ENCODE measurements at regions of chr1 and their contacts with region 1.

Region 1: DNA sequence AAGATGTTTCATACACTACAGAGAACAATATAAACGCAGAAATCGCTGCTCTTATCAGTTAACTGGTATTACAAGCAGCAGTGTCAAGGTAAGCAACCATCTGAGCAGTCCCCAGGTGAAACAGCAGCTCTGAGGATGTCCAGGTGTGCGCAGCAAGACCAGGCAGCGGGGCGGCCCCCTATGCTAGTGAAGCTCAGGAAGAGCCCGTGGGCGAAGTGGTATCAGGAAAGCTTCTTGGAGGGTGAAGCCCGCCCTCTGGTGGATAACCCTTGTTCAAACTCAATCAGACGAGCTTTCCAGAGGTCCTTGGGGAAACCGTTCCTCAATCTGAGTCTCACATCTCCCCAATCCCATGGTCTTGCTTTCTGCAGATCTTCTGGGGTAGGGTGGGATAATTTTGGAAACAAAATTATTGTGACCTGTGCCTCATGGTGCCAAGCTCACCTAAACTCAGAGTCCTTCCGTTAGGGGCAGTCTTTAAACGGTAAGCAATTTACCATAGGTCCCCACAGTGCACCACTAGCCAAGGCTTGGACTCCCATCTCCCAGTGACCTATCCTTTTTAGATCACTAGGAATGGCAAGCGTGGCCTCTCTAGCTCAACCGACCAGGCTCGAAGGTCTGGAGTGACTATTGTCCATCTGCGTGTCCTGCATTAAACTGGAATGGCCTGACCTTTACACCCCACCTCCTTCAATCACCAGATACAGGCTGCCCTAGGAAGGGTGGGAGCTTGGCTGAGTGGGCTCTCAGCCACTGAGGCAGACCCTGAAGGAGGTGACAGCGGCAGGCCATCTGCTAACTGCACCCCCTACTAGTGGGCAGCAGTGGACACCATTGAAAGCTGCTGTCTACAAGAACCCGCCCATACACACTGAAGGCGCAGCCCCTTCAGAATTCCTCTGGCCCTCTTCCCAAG is 13.6 kb upstream of the FAM110D start:
- DNase-seq: peak; percentile 76
- H3K4me3 ChIP-seq: no peak overlapping the region
- H3K27ac ChIP-seq: no peak overlapping the region
- H3K4me1 ChIP-seq: no peaks in the 10 kb centered on the region
- H3K27me3 ChIP-seq: no peaks in the 10 kb centered on the region
- CTCF ChIP-seq: peak; percentile 66 to 83
- POLR2A ChIP-seq: no peak

Region 2: GRCh38 chr1:26035959-26036755 is 109.1 kb before region 1 on chr1:
- CTCF ChIA-PET with region 1: interaction called, 151 read pairs
- POLR2A ChIA-PET with region 1: interaction called, 4 read pairs
- dilution Hi-C with region 1: no loop called
- intact Hi-C with region 1: loop called (anchors 1 kb)
- DNase-seq: peak; percentile 74
- H3K4me3 ChIP-seq: peak overlapping the region; percentile 65 to 85 (median 81)
- H3K27ac ChIP-seq: no peak overlapping the region
- H3K4me1 ChIP-seq: peaks cover 15% of the 10 kb centered on the region
- H3K27me3 ChIP-seq: peaks cover 0 to 3% of the 10 kb centered on the region in 2 experiments
- CTCF ChIP-seq: peak; percentile 98 to 99
- POLR2A ChIP-seq: no peak

Region 3: GRCh38 chr1:26111530-26112406 is 33.5 kb before region 1 on chr1 and contains the start of gene PDIK1L:
- CTCF ChIA-PET with region 1: interaction called, 33 read pairs
- POLR2A ChIA-PET with region 1: no interaction called
- dilution Hi-C with region 1: no loop called
- intact Hi-C with region 1: loop called (anchors 1 kb)
- DNase-seq: peak; percentile 96
- H3K4me3 ChIP-seq: peak within 1 kb of the TSS; percentile 63 to 99 (median 75)
- H3K27ac ChIP-seq: peak within 1 kb of the TSS; percentile 47
- H3K4me1 ChIP-seq: peaks cover 11% of the 10 kb centered on the region
- H3K27me3 ChIP-seq: no peaks in the 10 kb centered on the region
- CTCF ChIP-seq: no peak
- POLR2A ChIP-seq: peak; percentile 72
- total RNA-seq, gene PDIK1L: 5.6 and 8.0 TPM in 2 replicates

Region 4: DNA sequence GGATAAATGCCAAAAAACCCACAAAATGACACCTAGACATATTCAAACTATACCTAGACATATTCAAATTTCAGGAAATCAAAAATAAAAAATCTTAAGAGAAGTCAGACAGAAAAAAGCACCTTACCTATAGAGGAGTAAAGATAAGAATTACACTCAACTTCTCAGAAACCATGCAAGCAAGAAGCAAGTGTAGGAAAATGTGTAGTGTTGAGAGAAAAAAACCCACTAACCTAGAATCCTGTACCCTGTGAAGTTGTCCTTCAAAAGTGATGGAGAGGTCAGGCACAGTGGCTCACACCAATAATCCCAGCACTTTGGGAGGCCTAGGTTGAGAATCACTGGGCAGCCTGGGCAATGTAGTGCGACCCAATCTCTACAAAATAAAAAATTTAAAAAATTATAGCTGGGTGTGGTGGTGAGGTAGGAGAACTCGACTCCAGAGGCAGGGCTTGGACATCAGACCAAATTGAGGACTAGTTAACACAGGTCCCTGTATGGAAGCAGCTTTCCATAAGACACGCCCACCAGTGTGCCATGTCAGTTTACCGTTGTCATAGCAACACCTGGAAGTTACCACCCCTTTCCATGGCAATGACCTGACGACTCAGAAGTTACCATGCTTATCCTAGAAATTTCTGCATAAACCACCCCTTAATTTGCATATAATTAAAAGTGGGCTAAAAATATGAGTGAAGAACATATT is 13.0 kb before region 1 on chr1:
- CTCF ChIA-PET with region 1: interaction called, 62 read pairs
- POLR2A ChIA-PET with region 1: no interaction called
- dilution Hi-C with region 1: no loop called
- intact Hi-C with region 1: no loop called
- DNase-seq: no peak
- H3K4me3 ChIP-seq: no peak overlapping the region
- H3K27ac ChIP-seq: no peak overlapping the region
- H3K4me1 ChIP-seq: peaks cover 5% of the 10 kb centered on the region
- H3K27me3 ChIP-seq: no peaks in the 10 kb centered on the region
- CTCF ChIP-seq: no peak
- POLR2A ChIP-seq: no peak

Region 5: GRCh38 chr1:26169669-26170471 is 24.6 kb after region 1 on chr1 and contains the start of gene ZNF593:
- CTCF ChIA-PET with region 1: interaction called, 11 read pairs
- POLR2A ChIA-PET with region 1: no interaction called
- dilution Hi-C with region 1: no loop called
- intact Hi-C with region 1: no loop called
- DNase-seq: peak; percentile 88
- H3K4me3 ChIP-seq: peak within 1 kb of the TSS; percentile 46 to 72 (median 67)
- H3K27ac ChIP-seq: peak within 1 kb of the TSS; percentile 47
- H3K4me1 ChIP-seq: no peaks in the 10 kb centered on the region
- H3K27me3 ChIP-seq: no peaks in the 10 kb centered on the region
- CTCF ChIP-seq: peak; percentile 92 to 99
- POLR2A ChIP-seq: peak; percentile 88
- total RNA-seq, gene ZNF593: 30.5 and 41.0 TPM in 2 replicates